ENCODE measurements at regions of chr3 and their contacts with region 1.

Region 1: DNA sequence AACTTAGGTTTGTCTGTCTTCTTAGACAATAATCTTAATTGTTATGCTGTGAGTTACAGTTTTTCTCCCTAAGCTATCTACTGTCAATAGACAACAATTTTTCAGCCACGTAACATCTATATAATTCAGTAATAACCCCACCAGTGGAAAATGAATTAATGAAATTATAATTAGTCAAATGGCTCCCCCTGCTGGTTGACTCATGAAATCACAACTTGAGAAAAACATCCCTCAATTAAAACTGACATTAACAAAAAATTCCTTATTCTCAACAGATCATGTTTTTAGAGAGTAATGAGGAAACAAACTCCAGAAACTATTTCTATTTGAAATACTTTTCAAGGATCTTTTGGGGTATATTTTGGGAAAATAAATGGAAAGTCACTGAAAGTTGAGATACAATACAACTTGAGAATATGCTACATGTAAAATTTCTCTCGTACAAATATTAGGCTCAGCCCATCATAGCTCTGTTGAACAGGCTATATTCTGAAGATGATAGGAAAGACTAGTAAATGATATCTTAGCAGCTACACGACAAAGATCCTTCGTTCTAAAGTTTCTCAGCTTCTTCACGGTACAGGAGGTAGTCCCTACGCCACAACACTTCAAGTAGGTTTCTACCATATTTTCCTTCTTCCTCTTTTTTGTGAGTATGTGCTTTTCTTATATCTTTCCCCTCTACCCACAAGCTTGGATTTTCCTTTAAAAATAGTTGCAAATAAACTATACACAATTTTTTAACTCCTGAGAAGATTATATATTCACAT is 20.7 kb downstream of the PPP1R2 start:
- DNase-seq: no peak
- H3K4me3 ChIP-seq: no peak overlapping the region
- H3K27ac ChIP-seq: no peak overlapping the region
- H3K27me3 ChIP-seq: no peaks in the 10 kb centered on the region
- CTCF ChIP-seq: peak; percentile 43

Region 2: GRCh38 chr3:195286115-195286872 is 236.1 kb before region 1 on chr3:
- in situ Hi-C with region 1: loop called (anchors 25 kb)
- DNase-seq: no peak
- H3K4me3 ChIP-seq: no peak overlapping the region
- H3K27ac ChIP-seq: peak overlapping the region; percentile 4
- H3K27me3 ChIP-seq: no peaks in the 10 kb centered on the region
- CTCF ChIP-seq: no peak

Region 3: GRCh38 chr3:195956571-195956970 is 434.1 kb after region 1 on chr3:
- in situ Hi-C with region 1: no loop called
- DNase-seq: no peak
- H3K4me3 ChIP-seq: no peak overlapping the region
- H3K27ac ChIP-seq: no peak overlapping the region
- H3K27me3 ChIP-seq: no peaks in the 10 kb centered on the region
- CTCF ChIP-seq: no peak

Measured in brain microvascular endothelial cell (primary cell).